RWPE1 (cell line): ENCODE measurements at regions of chr20 and their contacts with region 1.

Region 1: DNA sequence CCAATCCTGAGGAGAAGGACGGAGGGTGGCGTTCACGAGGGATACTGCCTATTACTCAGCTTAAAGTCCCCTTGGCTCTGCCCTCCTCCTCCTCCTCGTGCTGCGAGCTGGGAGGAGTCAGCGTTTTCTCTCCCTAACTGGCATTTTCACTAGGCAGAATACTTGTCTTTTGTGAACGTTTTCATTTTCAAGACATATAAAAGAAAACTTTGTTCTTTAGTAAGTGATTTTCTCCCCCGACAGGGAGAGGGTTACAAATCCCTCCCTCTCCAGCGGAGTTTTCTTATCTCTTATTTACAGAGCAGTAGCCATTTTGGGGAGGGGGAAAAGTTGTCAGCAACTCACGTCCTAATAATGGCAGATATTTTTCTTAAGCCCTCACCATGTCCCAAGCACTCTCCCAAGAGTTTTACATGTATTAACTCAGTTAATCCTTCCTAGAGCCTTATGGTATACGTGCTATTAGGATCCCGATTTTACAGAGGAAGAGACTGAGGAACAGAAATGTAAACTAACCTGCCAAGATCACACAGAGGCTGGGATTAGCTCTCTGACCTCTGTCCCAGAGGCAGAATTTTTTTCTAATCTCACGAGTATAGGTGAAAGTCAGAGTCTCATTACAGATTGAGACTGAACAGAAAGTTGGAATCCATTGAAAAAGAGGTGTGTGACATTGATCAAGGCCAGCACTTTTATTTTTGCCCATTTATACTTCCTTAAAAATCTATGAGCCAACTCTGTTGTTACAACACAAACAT is 30.0 kb upstream of the ZNF217 start:
- DNase-seq: peak; percentile 65
- H3K27ac ChIP-seq: peak overlapping the region; percentile 70
- CTCF ChIP-seq: no peak

Region 2: GRCh38 chr20:53582574-53583351 is 40.9 kb before region 1 on chr20:
- CTCF ChIA-PET with region 1: no interaction called
- POLR2A ChIA-PET with region 1: no interaction called
- DNase-seq: peak; percentile 97
- H3K27ac ChIP-seq: peak overlapping the region; percentile 72
- CTCF ChIP-seq: no peak

Region 3: DNA sequence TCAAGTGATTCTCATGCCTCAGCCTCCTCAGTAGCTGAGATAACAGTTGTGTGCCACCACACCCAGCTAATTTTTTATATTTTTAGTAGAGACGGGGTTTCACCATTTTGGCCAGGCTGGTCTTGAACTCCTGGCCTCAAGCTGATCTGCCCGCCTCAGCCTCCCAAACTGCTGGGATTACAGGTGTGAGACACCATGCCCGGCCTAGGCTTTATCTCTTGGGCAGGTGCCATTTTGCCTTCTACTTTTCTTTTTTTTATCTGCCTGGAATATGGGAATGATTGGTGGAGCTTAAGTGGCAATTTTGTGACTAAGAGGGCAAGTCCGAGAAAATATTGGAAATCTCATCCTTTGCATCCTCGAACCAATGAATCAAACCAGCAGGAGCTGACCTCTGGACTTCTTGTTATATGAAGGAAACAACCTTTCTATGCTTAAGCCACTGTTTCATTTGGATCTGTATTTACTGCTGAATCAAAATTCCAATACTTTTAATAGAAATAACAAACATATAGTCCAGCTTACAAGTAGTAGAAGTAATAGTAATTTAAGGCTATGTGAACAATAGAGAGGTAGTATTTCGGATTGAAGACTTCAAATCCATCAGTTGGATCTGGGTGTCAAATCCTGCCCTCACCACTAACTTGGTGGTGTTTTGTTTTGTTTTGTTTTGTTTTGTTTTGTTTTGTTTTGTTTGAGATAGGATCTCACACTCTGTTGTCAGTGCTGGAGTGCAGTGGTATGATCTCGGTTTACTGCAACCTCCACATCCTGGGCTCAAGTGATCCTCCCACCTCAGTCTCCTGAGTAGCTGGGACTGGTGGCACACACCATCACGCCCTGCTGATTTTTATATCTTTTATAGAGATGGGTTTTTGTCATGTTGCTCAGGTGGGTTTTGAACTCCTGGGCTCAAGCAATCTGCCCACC is 99.1 kb after region 1 on chr20:
- CTCF ChIA-PET with region 1: no interaction called
- POLR2A ChIA-PET with region 1: interaction called, 10 read pairs
- DNase-seq: no peak
- H3K27ac ChIP-seq: no peak overlapping the region
- CTCF ChIP-seq: no peak